ENCODE measurements at regions of chr1 and their contacts with region 1.

Region 1: DNA sequence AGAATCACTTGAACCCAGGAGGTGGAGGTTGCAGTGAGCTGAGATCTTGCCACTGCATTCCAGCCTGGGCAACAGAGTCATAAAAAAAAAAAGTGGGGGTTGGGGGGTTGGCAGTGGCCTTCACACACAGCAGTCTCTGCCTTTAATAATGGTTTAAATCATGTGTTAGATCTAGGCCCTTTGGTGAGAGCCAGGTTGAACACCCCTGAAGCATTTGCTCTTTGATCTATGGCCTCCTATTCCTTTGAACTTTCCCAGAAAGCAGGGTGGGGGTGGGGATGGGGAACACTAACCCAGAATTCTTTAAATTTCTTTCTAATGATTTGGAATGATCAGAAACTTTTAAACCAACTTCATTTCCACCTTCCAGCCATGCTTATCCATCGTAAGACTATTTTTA is 313.0 kb downstream of the KIF26B start:
- DNase-seq: no peak
- H3K4me3 ChIP-seq: no peak overlapping the region
- H3K27ac ChIP-seq: no peak overlapping the region
- H3K4me1 ChIP-seq: no peaks in the 10 kb centered on the region
- H3K27me3 ChIP-seq: no peaks in the 10 kb centered on the region
- CTCF ChIP-seq: no peak
- EP300 ChIP-seq: no peak
- POLR2A ChIP-seq: no peak

Region 2: DNA sequence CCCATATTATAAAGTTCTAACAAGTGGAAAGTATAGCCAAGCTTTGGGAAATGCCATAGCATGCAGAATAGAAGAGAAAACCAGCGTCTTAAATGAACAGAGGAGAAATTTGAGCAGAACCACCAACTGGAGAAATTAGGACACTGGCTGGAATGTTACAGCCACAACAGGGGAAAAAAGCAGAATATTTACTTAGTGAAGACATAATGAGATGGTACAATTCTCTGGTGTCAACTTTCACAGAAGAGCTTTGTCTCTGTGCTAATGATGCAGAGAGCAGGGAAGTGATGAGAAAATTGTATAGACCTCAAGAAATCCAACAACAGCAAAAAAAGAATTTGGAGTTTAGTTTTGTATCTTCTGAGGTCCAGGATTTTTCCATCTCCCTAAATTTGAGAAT is 63.3 kb before region 1 on chr1:
- in situ Hi-C with region 1: no loop called
- intact Hi-C with region 1: no loop called
- DNase-seq: no peak
- H3K4me3 ChIP-seq: no peak overlapping the region
- H3K27ac ChIP-seq: no peak overlapping the region
- H3K4me1 ChIP-seq: no peaks in the 10 kb centered on the region
- H3K27me3 ChIP-seq: peaks cover 63% of the 10 kb centered on the region
- CTCF ChIP-seq: no peak
- EP300 ChIP-seq: no peak
- POLR2A ChIP-seq: no peak

Region 3: GRCh38 chr1:245419461-245419978 is 48.3 kb before region 1 on chr1:
- in situ Hi-C with region 1: no loop called
- intact Hi-C with region 1: loop called (anchors 1 kb)
- DNase-seq: no peak
- H3K4me3 ChIP-seq: no peak overlapping the region
- H3K27ac ChIP-seq: no peak overlapping the region
- H3K4me1 ChIP-seq: no peaks in the 10 kb centered on the region
- H3K27me3 ChIP-seq: peaks cover 3% of the 10 kb centered on the region
- CTCF ChIP-seq: no peak
- EP300 ChIP-seq: no peak
- POLR2A ChIP-seq: no peak

Region 4: GRCh38 chr1:245493029-245493428 is 25.2 kb after region 1 on chr1:
- in situ Hi-C with region 1: no loop called
- intact Hi-C with region 1: no loop called
- DNase-seq: no peak
- H3K4me3 ChIP-seq: no peak overlapping the region
- H3K27ac ChIP-seq: no peak overlapping the region
- H3K4me1 ChIP-seq: no peaks in the 10 kb centered on the region
- H3K27me3 ChIP-seq: no peaks in the 10 kb centered on the region
- CTCF ChIP-seq: no peak
- EP300 ChIP-seq: no peak
- POLR2A ChIP-seq: no peak

Measured in transverse colon (tissue), 4 donors.